GM10248 (cell line): ENCODE measurements at regions of chr12 and their contacts with region 1.

Region 1: DNA sequence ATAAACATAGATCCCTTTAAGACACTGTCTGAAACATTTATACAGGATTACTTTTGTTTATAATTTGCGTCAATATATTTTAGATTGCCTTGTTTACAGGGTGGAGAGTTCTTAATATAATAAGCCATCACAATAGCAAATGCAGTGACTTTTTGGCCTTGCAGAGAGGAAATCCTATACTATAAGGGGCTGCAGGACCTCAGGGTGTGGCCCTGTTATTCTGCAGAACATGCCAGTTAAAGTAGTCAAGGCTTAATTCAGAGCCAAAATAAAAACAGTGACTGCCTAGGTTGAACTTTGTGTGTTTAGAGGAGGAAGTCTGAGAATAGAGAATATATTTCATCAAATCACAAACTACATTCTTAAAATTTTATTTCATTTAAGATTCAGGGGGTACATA is 381.6 kb downstream of the DUSP6 start:
- DNase-seq: no peak
- CTCF ChIP-seq: no peak

Region 2: GRCh38 chr12:88805692-88806091 is 165.1 kb before region 1 on chr12:
- CTCF ChIA-PET with region 1: no interaction called
- POLR2A ChIA-PET with region 1: no interaction called
- DNase-seq: no peak
- CTCF ChIP-seq: no peak

Region 3: GRCh38 chr12:88897723-88898122 is 73.0 kb before region 1 on chr12:
- CTCF ChIA-PET with region 1: no interaction called
- POLR2A ChIA-PET with region 1: no interaction called
- DNase-seq: no peak
- CTCF ChIP-seq: no peak

Region 4: GRCh38 chr12:88946372-88946997 is 24.3 kb before region 1 on chr12:
- CTCF ChIA-PET with region 1: no interaction called
- POLR2A ChIA-PET with region 1: no interaction called
- DNase-seq: no peak
- CTCF ChIP-seq: no peak

Region 5: DNA sequence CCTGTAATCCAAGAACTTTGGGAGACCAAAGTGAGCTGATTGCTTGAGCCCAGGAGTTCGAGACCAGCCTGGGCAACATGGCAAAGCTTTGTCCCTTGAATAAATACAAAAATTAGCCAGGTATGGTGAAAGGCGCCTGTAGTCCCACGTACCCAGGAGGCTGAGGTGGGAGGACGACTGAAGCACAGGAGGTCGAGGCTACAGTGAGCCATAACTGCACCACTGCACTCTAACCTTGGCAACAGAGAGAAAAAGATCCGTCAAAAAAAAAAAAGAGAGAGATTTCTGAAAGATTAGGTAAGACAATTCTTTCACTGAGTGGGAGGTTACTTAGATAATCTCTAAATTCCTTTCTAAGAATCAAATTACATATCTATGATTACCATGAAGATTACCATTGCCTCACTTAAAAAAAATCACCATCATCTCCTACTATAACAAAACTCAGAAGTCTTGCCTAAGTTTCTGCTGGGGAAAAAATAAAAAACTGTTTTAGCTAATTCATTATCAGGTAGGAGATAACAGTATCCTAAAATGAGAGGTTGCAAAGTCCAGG is 14.8 kb after region 1 on chr12:
- CTCF ChIA-PET with region 1: interaction called, 11 read pairs
- POLR2A ChIA-PET with region 1: no interaction called
- DNase-seq: no peak
- CTCF ChIP-seq: no peak